Endothelial cell of umbilical vein (primary cell): ENCODE measurements at regions of chr11 and their contacts with region 1.

Region 1: DNA sequence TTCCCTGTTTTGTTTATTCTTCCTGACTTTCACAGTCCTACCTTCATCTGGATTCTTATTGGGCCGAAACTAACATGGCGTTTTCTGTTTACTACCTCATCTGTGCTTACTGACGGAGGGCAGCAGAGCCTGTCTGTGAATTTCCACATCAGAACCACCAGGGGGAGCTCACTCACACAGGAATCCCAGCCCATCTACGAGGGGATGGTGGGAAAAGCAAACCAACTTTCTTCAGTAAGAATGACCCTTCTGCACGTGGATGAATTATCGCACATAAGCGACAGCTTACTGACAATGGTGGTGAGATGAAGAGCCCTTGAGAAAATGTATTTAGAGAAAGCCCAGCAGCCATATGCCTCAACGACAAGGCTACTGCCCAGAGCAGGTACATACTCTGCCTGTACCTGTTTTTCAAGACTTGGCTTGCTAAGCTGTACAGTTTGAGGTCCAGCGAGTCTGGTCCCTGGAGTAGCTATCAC is 42.5 kb downstream of the LARGE2 start:
- DNase-seq: peak; percentile 86
- H3K4me3 ChIP-seq: no peak overlapping the region
- H3K27ac ChIP-seq: no peak overlapping the region
- H3K4me1 ChIP-seq: no peaks in the 10 kb centered on the region
- H3K27me3 ChIP-seq: no peaks in the 10 kb centered on the region
- CTCF ChIP-seq: peak; percentile 87 to 88
- POLR2A ChIP-seq: no peak

Region 2: DNA sequence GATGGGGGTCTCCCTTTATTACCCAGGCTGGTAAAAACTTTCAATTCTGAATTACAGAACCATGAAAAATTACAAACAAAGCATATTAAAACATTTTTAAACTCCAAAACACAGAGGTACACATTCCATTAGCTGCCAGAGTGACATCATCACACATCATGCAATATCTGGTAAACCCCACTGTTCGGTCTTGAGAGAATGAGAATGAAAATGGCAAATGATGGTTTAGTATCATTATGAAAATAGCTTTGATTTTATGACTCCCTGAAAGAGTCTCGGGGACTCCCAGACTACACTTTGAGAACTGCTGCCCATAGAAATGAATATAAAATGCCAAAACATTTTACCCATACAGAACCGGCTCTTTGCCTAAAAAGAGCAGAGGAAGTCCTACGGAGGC is 23.7 kb before region 1 on chr11:
- CTCF ChIA-PET with region 1: interaction called, 52 read pairs
- POLR2A ChIA-PET with region 1: no interaction called
- dilution Hi-C with region 1: no loop called
- intact Hi-C with region 1: no loop called
- DNase-seq: no peak
- H3K4me3 ChIP-seq: no peak overlapping the region
- H3K27ac ChIP-seq: no peak overlapping the region
- H3K4me1 ChIP-seq: no peaks in the 10 kb centered on the region
- H3K27me3 ChIP-seq: no peaks in the 10 kb centered on the region
- CTCF ChIP-seq: no peak
- POLR2A ChIP-seq: no peak

Region 3: GRCh38 chr11:45982656-45983470 is 17.9 kb after region 1 on chr11:
- CTCF ChIA-PET with region 1: interaction called, 27 read pairs
- POLR2A ChIA-PET with region 1: no interaction called
- dilution Hi-C with region 1: no loop called
- intact Hi-C with region 1: no loop called
- DNase-seq: peak; percentile 70
- H3K4me3 ChIP-seq: no peak overlapping the region
- H3K27ac ChIP-seq: no peak overlapping the region
- H3K4me1 ChIP-seq: peaks cover 4% of the 10 kb centered on the region
- H3K27me3 ChIP-seq: no peaks in the 10 kb centered on the region
- CTCF ChIP-seq: no peak
- POLR2A ChIP-seq: no peak

Region 4: DNA sequence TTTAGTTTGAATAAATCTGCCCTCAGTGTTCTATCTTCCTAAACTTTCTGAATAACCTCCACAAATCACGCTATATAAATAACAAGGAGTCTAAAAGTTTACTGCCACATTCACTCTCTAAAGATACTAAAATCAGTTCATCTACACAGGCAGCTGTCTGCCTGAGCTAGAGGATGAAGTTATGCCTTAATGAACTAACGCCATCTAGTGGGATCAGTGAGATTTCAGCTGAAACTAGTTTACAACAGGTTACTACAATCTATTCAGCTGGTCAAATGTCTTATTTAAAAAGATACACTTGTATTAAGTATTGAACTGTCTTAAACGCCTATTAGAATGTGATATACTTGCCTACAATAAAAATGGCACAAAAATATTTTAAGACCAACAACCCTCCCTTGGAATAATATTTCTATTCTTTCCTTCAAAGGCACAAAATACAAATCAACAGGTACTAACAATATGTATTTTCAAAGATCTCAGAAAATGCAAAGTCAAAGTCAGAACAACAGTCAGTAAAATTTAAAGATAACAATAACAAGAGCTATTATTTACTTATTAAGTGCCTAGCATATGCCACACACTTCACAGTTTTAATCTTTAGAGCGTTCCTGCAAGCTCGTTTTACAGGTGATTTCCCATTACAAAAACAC is 41.6 kb after region 1 on chr11:
- CTCF ChIA-PET with region 1: interaction called, 143 read pairs
- POLR2A ChIA-PET with region 1: no interaction called
- dilution Hi-C with region 1: no loop called
- intact Hi-C with region 1: loop called (anchors 1 kb)
- DNase-seq: peak; percentile 79
- H3K4me3 ChIP-seq: no peak overlapping the region
- H3K27ac ChIP-seq: no peak overlapping the region
- H3K4me1 ChIP-seq: no peaks in the 10 kb centered on the region
- H3K27me3 ChIP-seq: no peaks in the 10 kb centered on the region
- CTCF ChIP-seq: peak; percentile 39 to 55
- POLR2A ChIP-seq: no peak

Region 5: DNA sequence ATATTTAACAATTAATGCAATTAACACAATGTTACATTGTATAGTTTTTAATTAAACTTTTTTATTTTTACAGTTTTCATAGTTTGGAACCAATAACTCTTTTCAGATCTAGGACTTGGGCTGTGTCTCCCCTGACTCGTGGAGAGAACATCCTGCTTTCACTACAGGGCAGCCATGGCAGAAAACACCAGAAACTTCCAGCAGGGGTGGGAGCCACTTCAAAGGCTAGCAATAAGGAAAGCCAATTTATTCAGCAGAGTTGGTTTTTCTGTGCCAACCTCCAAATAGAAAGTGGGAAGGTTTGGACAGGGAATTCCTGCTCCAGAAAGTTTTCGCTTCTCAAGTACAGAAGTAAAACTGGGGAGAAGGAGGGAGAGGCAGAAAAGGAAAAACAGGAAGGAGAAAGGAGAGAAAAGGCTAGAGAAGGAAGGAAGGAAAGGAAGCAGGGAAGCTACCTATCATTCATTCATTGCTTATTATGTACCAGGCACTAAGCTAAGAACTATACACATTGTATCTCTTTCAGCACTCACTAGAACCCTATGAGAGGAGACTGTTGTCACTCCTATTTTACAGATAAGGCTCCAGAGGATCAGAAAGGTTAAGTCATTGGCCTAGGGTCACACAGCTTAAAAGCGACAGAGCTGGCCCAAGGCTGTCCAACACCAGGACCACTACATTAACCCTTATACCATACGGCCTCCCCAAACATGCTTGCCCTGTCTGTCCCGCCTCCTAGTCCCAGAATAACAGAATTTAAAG is 257.7 kb after region 1 on chr11:
- CTCF ChIA-PET with region 1: no interaction called
- POLR2A ChIA-PET with region 1: no interaction called
- dilution Hi-C with region 1: no loop called
- intact Hi-C with region 1: no loop called
- DNase-seq: no peak
- H3K4me3 ChIP-seq: no peak overlapping the region
- H3K27ac ChIP-seq: no peak overlapping the region
- H3K4me1 ChIP-seq: no peaks in the 10 kb centered on the region
- H3K27me3 ChIP-seq: peaks cover 2 to 11% of the 10 kb centered on the region in 2 experiments
- CTCF ChIP-seq: no peak
- POLR2A ChIP-seq: no peak

Region 6: DNA sequence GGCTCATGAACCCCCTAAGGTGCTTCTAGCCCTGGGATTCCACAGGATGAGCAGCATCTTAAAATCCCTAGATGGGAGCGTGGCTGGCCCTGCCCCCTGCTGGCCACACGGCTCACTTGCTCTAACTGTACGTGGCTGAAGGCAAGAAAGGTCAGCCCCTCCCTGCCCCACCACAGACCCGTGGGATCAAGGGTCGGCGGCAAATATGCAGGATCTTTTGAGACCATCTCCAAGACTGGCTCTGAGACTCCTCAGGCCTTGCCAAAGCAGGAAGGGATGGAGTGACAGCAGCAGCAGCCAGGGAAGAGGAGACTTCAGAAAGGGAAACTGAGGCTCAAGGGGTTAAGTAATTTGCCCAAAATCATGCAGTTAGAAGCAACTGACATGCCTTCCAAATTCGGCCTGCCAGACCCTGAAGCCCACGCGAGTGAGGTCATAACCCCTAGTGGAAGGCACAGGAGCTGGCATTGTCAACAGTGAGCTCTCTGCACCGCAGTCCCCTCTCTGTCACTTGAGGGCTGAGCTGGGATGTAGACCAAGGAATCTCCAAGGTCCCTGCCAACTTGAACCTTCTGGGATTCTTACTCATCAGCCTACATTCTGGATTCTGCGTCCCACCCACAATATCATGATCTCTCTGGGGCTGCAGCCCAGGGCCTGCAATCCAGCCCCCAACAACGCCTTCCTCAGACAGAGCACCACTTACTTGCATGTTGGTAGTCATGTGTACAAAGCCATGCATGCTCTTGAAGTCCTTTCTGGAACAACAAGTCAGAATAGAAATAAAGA is 343.9 kb after region 1 on chr11:
- CTCF ChIA-PET with region 1: interaction called, 40 read pairs
- POLR2A ChIA-PET with region 1: no interaction called
- dilution Hi-C with region 1: no loop called
- intact Hi-C with region 1: loop called (anchors 2 kb)
- DNase-seq: peak; percentile 60
- H3K4me3 ChIP-seq: no peak overlapping the region
- H3K27ac ChIP-seq: no peak overlapping the region
- H3K4me1 ChIP-seq: no peaks in the 10 kb centered on the region
- H3K27me3 ChIP-seq: no peaks in the 10 kb centered on the region
- CTCF ChIP-seq: peak; percentile 92 to 93
- POLR2A ChIP-seq: no peak